A549 (cell line): ENCODE measurements at regions of chrX and their contacts with region 1.

Region 1: GRCh38 chrX:130060122-130061069 is 49.9 kb downstream of the ELF4 start:
- DNase-seq: peak; percentile 77 to 88
- ATAC-seq: peak; percentile 92 to 95
- H3K4me3 ChIP-seq: peak overlapping the region; percentile 60
- H3K27ac ChIP-seq: peak overlapping the region; percentile 94 to 95
- H3K4me1 ChIP-seq: peaks cover 5% of the 10 kb centered on the region; the same call in 1 of the 3 replicates
- CTCF ChIP-seq: peak; percentile 82
- EP300 ChIP-seq: no peak
- POLR2A ChIP-seq: no peak
- RAD21 ChIP-seq: peak; percentile 75 to 86

Region 2: DNA sequence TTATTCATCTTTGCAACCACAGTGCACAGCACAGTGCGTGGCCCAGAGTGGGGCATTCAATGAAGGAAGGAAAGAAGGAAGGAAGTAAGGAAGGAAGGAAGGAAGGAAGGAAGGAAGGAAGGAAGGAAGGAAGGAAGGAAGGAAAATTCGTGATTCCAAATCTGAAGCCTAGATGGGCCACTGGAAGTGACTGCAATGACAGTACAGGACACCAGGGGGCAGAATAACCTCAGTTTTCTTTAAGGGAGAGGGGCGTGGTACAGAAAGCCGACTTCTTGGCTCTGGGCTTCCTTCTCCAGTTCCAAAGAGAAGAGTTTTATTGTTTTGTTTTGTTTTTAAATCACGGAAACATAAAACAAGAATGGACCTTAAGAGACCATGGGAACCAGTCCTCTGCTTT is 453.5 kb before region 1 on chrX:
- CTCF ChIA-PET with region 1: interaction called, 21 read pairs
- POLR2A ChIA-PET with region 1: no interaction called
- DNase-seq: peak; percentile 47 to 62
- ATAC-seq: peak; percentile 59 to 69; a peak in 4 of 6 replicates
- H3K4me3 ChIP-seq: no peak overlapping the region
- H3K27ac ChIP-seq: no peak overlapping the region
- H3K4me1 ChIP-seq: peaks cover 4% of the 10 kb centered on the region; the same call in 1 of the 3 replicates
- CTCF ChIP-seq: peak; percentile 72
- EP300 ChIP-seq: no peak
- POLR2A ChIP-seq: no peak
- RAD21 ChIP-seq: peak; percentile 83 to 87

Region 3: DNA sequence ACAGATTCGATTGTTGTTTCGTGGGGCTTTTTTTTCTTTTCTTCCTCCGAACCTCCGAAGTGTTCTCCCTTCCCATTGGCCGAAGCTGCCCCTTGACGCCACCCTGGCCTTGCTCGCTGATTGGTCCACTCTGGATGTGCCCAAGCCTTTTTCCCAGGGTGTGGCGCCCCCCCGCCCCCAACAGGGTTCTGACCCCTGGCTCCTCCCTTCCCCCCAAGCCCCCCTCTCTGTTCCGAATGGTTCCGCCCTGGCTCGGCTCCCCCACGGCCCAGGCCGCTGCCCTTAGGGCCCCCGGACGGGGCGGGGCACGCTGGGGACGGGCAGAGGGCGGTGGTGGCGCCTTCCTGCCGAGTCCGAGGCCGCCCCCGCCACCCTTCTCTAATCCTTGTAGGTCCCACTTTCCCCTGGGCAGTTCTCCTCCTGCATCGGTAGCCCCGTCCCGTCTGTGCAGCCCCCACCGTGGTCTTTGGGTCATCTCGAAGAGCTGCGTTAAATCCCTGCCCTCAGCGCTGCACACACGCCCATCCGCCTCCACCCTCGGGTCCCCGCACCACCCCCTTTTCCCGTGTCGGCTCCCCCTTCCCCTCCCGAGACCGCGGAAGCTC is 128.9 kb before region 1 on chrX:
- CTCF ChIA-PET with region 1: interaction called, 15 read pairs
- POLR2A ChIA-PET with region 1: interaction called, 3 read pairs
- DNase-seq: peak; percentile 95 to 97
- ATAC-seq: peak; percentile 78 to 91
- H3K4me3 ChIP-seq: peak overlapping the region; percentile 82
- H3K27ac ChIP-seq: peak overlapping the region; percentile 95 to 99
- H3K4me1 ChIP-seq: peaks cover 8% of the 10 kb centered on the region; the same call in 1 of the 3 replicates
- CTCF ChIP-seq: no peak
- EP300 ChIP-seq: no peak
- POLR2A ChIP-seq: peak; percentile 58; the same call in 1 of the 2 replicates
- RAD21 ChIP-seq: no peak

Region 4: GRCh38 chrX:130039847-130040246 is 20.5 kb before region 1 on chrX:
- CTCF ChIA-PET with region 1: interaction called, 23 read pairs
- POLR2A ChIA-PET with region 1: no interaction called
- DNase-seq: no peak
- ATAC-seq: no peak
- H3K4me3 ChIP-seq: no peak overlapping the region
- H3K27ac ChIP-seq: no peak overlapping the region
- H3K4me1 ChIP-seq: no peaks in the 10 kb centered on the region
- CTCF ChIP-seq: no peak
- EP300 ChIP-seq: no peak
- POLR2A ChIP-seq: no peak
- RAD21 ChIP-seq: no peak